ENCODE measurements at regions of chr5 and their contacts with region 1.

Region 1: GRCh38 chr5:59810041-59810440 is 83.5 kb downstream of the PDE4D start:
- DNase-seq: peak in 1 of 2 experiments; percentile 49
- H3K4me3 ChIP-seq: peak overlapping the region; percentile 55
- H3K27ac ChIP-seq: no peak overlapping the region
- H3K4me1 ChIP-seq: 0 out of 2 replicates have a peak, but pooled peaks cover 4% of the 10 kb centered on the region
- H3K27me3 ChIP-seq: no peaks in the 10 kb centered on the region
- CTCF ChIP-seq: peak; percentile 97

Region 2: DNA sequence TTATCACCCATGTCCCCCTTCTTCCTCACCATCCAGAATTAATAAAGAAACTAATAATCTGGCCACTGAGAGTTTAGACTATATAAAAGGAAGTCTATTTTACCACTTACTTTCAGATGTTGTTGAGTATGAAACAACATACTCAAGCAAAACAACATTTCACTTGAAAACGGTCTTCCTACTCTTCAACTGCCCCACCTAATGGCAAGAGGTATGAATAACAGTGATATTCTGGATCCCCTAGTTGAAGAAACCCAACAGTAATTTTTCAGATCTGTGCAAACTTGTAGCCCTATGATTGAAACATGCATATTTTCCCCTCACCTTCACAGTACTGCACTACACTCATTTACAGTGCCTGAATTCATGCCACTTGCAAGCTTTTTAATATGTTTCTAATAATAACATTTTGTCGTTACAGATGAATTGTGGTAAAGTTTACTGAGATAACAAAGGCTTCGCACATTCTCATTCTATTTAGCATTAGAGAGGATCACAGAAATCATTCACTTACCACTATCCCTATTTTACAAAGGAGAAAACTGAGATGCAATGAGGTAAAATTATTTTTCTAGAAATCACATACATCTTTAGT is 351.4 kb after region 1 on chr5:
- CTCF ChIA-PET with region 1: no interaction called
- POLR2A ChIA-PET with region 1: no interaction called
- intact Hi-C with region 1: loop called (anchors 1 kb)
- DNase-seq: peak in 1 of 2 experiments; percentile 0
- H3K4me3 ChIP-seq: no peak overlapping the region
- H3K27ac ChIP-seq: no peak overlapping the region
- H3K4me1 ChIP-seq: no peaks in the 10 kb centered on the region
- H3K27me3 ChIP-seq: no peaks in the 10 kb centered on the region
- CTCF ChIP-seq: peak; percentile 60

Region 3: DNA sequence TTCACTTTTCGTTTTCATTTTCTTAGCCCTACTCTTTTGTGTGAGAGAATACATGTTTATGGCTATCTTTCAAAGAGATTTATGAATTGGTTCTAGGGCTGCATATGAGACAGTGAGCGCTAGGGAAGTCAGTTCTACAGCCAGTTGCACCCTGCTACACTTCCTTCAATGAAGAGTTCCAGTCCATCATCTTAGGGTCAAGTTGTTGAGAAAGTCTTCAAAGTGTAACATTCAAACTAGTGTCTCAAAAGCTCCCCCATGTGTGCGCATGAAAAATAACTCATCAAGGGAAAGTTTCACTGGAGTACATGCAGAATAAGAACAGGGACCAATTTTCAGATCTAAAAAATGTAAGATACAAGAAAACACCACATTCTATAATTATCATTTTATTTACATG is 572.7 kb after region 1 on chr5:
- CTCF ChIA-PET with region 1: no interaction called
- POLR2A ChIA-PET with region 1: no interaction called
- intact Hi-C with region 1: loop called (anchors 1 kb)
- DNase-seq: no peak
- H3K4me3 ChIP-seq: no peak overlapping the region
- H3K27ac ChIP-seq: no peak overlapping the region
- H3K4me1 ChIP-seq: no peaks in the 10 kb centered on the region
- H3K27me3 ChIP-seq: no peaks in the 10 kb centered on the region
- CTCF ChIP-seq: peak; percentile 42; the same call in 1 of the 2 replicates

Region 4: DNA sequence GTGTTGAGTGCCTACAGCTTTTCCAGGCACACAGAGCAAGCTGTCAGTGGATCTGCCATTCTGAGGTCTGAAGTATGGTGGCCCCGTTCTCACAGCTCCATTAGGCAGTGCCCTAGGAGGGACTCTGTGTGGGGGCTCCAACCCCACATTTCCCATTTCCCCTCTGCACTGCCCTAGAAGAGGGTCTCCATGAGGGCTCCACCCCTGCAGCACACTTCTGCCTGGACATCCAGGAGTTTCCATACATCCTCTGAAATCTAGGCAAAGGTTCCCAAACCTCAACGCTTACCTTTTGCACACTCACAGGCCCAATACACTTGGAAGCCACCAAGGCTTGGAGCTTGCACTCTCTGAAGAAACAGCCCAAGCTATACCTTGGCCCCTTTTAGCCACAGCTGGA is 758.6 kb after region 1 on chr5:
- CTCF ChIA-PET with region 1: no interaction called
- POLR2A ChIA-PET with region 1: interaction called, 19 read pairs
- intact Hi-C with region 1: no loop called
- DNase-seq: no peak
- H3K4me3 ChIP-seq: no peak overlapping the region
- H3K27ac ChIP-seq: no peak overlapping the region
- H3K4me1 ChIP-seq: no peaks in the 10 kb centered on the region
- H3K27me3 ChIP-seq: no peaks in the 10 kb centered on the region
- CTCF ChIP-seq: no peak

Region 5: DNA sequence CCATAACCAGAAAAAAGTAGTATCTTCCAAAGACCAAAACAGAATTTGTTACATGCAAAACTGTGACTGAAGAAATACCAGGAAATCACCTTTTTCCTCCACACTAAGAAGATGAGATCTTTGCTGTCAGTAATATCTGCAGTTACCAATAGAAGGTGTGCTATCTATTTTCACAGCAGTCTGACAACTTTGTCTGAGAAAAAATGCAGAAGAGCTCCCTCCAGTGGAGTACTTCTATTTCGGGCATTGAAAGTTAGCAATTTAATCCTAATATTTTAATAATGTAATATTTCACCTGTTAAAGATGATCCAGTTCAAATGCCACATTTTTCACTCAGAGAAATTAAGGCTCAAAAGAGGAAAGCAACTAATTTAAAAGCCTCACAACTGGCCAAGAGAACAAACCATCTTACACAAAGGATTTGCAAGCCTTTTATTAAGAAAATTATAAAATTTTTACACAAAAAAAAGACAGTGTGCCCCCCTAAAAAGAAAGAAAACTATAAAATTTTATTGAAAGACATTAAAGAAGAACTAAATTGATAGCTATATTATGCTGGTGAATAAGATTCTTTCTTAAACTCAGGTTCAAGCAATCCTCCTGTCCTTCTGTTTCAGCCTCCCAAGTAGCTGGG is 839.4 kb after region 1 on chr5:
- CTCF ChIA-PET with region 1: no interaction called
- POLR2A ChIA-PET with region 1: no interaction called
- intact Hi-C with region 1: loop called (anchors 1 kb)
- DNase-seq: no peak
- H3K4me3 ChIP-seq: no peak overlapping the region
- H3K27ac ChIP-seq: no peak overlapping the region
- H3K4me1 ChIP-seq: peaks cover 6% of the 10 kb centered on the region; the same call in 1 of the 2 replicates
- H3K27me3 ChIP-seq: no peaks in the 10 kb centered on the region
- CTCF ChIP-seq: peak; percentile 68

Measured in PC-9 (cell line).